ENCODE measurements at regions of chr14 and their contacts with region 1.

Region 1: DNA sequence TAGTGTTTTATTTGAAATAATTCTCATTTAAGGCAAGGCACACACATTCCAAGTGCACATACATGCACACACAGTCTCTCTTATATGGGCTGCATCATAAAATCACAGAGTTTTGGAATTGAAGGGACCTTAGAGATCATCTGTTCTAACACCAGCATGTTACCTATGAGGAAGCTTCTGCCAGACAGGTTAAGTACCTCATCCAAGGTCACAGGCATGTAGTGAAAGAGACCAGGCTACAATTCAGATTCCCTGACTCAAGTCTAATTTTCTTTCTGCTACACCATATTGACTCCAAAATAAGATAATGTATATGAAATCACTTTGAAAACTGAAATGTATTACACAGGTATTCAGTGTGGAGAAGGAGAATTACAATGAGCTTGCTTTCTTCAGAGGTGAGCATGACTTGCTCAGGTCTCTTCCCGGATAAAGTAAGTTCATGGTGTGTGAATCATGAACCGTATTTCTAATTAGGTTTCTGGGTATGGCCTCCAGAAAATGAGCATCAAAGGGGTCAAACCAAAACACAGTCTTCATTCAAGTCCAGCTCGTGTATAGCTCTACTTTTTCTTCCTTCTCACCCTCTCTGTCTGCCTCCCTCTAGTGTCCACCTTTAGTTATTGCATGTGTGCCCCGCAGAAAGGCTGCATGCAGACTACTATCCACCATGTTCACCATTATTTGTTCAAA is 411.9 kb downstream of the FUT8 start:
- DNase-seq: peak; percentile 12 to 79 (median 40)
- ATAC-seq: peak; percentile 76 to 96 (median 90)
- H3K4me3 ChIP-seq: no peak overlapping the region
- H3K4me3 Mint-ChIP-seq: no peak overlapping the region
- H3K27ac ChIP-seq: no peak overlapping the region
- H3K27ac Mint-ChIP-seq: peak overlapping the region in 1 of 2 donors; percentile 47
- H3K4me1 ChIP-seq: peaks cover 0 to 8% of the 10 kb centered on the region in 2 experiments
- H3K4me1 Mint-ChIP-seq: peaks cover 10 to 18% (median 14%) of the 10 kb centered on the region in 3 donors
- H3K27me3 ChIP-seq: no peaks in the 10 kb centered on the region
- H3K27me3 Mint-ChIP-seq: no peaks in the 10 kb centered on the region

Region 2: GRCh38 chr14:65164068-65164824 is 660.2 kb before region 1 on chr14:
- CTCF ChIA-PET with region 1: interaction called, 6 to 29 read pairs
- POLR2A ChIA-PET with region 1: no interaction called
- DNase-seq: peak in 23 of 35 experiments; percentile 5 to 77 (median 23)
- ATAC-seq: peak; percentile 43 to 64 (median 54)
- H3K4me3 ChIP-seq: no peak overlapping the region
- H3K4me3 Mint-ChIP-seq: no peak overlapping the region
- H3K27ac ChIP-seq: no peak overlapping the region
- H3K27ac Mint-ChIP-seq: no peak overlapping the region
- H3K4me1 ChIP-seq: no peaks in the 10 kb centered on the region
- H3K4me1 Mint-ChIP-seq: peaks cover 0 to 6% (median 6%) of the 10 kb centered on the region in 3 donors
- H3K27me3 ChIP-seq: no peaks in the 10 kb centered on the region
- H3K27me3 Mint-ChIP-seq: no peaks in the 10 kb centered on the region

Region 3: GRCh38 chr14:65804752-65805473 is 19.5 kb before region 1 on chr14:
- CTCF ChIA-PET with region 1: interaction called in 1 of 2 experiments, 10 read pairs
- POLR2A ChIA-PET with region 1: no interaction called
- DNase-seq: no peak
- ATAC-seq: no peak
- H3K4me3 ChIP-seq: no peak overlapping the region
- H3K4me3 Mint-ChIP-seq: no peak overlapping the region
- H3K27ac ChIP-seq: no peak overlapping the region
- H3K27ac Mint-ChIP-seq: no peak overlapping the region
- H3K4me1 ChIP-seq: no peaks in the 10 kb centered on the region
- H3K4me1 Mint-ChIP-seq: no peaks in the 10 kb centered on the region
- H3K27me3 ChIP-seq: peaks cover 0 to 4% of the 10 kb centered on the region in 2 experiments
- H3K27me3 Mint-ChIP-seq: no peaks in the 10 kb centered on the region

Region 4: GRCh38 chr14:65847075-65847847 is 22.8 kb after region 1 on chr14:
- CTCF ChIA-PET with region 1: interaction called in 1 of 2 experiments, 36 read pairs
- POLR2A ChIA-PET with region 1: no interaction called
- DNase-seq: peak; percentile 36 to 89 (median 73)
- ATAC-seq: peak; percentile 86 to 90 (median 87)
- H3K4me3 ChIP-seq: peak overlapping the region; percentile 13 to 40
- H3K4me3 Mint-ChIP-seq: peak overlapping the region; percentile 52 to 73 (median 66)
- H3K27ac ChIP-seq: peak overlapping the region; percentile 94
- H3K27ac Mint-ChIP-seq: peak overlapping the region; percentile 87 to 95
- H3K4me1 ChIP-seq: peaks cover 76 to 87% of the 10 kb centered on the region in 2 experiments
- H3K4me1 Mint-ChIP-seq: peaks cover 88 to 91% (median 90%) of the 10 kb centered on the region in 3 donors
- H3K27me3 ChIP-seq: no peaks in the 10 kb centered on the region
- H3K27me3 Mint-ChIP-seq: no peaks in the 10 kb centered on the region

Region 5: DNA sequence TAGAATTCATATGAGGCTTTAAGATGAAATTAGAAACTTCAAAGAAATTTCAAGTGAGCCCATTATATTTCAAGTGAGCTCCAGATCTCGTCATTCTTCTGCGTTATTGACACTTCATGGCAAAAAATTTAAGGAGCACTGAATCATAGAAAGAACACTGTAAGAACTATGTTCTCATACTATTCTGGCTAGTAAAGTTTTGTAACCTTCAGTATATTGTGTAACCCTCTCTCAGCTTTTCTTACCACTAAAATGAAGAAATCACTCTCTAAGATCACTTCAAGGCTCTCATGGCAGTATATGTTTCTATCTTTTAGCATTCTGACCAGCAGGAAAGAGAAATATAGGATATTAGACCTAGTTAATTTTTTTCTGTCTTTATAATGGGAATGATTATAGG is 689.8 kb after region 1 on chr14:
- CTCF ChIA-PET with region 1: no interaction called
- POLR2A ChIA-PET with region 1: no interaction called
- DNase-seq: no peak
- ATAC-seq: no peak
- H3K4me3 ChIP-seq: no peak overlapping the region
- H3K4me3 Mint-ChIP-seq: no peak overlapping the region
- H3K27ac ChIP-seq: no peak overlapping the region
- H3K27ac Mint-ChIP-seq: no peak overlapping the region
- H3K4me1 ChIP-seq: peaks cover 3 to 5% of the 10 kb centered on the region in 2 experiments
- H3K4me1 Mint-ChIP-seq: peaks cover 28 to 34% (median 32%) of the 10 kb centered on the region in 3 donors
- H3K27me3 ChIP-seq: peaks cover 0 to 2% of the 10 kb centered on the region in 2 experiments
- H3K27me3 Mint-ChIP-seq: peaks cover 0 to 2% of the 10 kb centered on the region in 2 donors